ENCODE measurements at regions of chr10 and their contacts with region 1.

Region 1: DNA sequence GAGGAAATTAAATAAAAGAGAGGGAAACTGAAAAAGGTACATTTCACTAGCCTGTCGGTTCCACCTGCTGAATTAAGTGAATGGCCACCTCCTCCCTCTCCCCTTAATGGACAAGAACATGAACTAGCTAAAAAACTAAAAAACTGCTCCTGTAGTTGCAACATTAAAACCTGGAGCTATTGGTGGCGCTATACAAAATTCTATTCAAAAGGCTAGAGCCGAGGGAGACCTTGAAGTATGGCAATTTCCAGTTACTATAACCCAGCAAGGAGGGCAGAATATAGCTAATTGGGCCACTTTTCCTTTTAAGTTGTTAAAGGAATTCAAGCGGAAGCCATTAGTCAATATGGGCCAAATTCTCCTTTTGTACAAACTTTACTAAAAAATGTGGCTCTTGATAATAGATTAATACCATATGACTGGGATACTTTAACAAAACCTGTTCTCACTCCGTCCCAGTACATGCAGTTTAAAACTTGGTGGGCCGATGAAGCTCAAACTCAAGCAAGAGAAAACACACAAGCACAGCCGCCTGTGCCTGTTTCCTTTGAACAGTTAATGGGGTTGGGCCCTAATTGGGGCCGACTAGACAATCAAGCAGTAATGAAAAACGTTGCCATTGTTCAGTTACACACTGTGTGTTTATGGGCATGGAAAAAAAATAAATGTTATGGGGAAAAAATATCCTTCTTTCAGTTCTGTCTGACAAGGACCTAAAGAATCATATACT is 6.5 kb upstream of the CHST3 start:
- DNase-seq: no peak
- H3K4me3 Mint-ChIP-seq: no peak overlapping the region
- H3K27ac Mint-ChIP-seq: no peak overlapping the region
- H3K4me1 Mint-ChIP-seq: peaks cover 4% of the 10 kb centered on the region
- H3K27me3 Mint-ChIP-seq: peaks cover 46% of the 10 kb centered on the region

Region 2: DNA sequence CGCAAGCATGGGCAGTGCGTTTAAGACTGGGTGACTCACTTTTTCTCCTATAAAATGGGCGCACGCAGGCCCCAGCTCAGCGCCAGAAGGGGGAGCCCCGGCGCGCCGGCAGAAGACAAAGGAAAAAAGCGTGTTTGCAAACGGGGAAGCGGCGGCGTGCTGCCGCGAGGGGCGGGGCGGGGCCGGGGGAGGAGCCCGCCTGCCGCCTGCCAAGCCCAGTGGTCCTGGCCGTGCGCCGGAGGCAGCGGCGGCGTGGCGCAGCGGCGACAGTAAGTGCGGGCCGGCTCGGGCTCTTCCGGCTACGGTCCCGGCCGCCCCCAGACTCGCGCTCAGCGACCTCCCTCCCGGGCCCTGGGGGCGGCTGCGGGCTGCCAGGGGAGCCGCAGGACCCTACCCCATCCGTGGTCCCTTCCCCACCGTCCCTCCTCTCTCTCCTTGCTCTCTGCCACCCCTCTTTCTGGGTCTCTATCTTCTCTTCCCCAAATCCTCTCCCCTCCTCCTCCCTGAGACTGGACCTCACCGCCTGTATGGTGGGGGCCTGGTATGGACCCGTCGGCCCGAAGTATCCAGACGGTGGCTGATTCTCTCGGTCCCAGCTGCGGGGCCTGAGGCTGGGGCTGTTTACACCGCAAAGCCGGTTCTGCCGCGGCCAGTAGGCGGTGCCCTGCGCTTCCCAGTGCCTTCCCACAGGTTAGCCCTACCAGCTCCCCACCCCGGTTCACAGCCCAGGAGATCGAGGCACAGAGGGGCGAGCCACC is 638.5 kb before region 1 on chr10 and contains the start of gene SLC29A3:
- intact Hi-C with region 1: no loop called
- DNase-seq: peak; percentile 86
- H3K4me3 Mint-ChIP-seq: peak within 1 kb of the TSS; percentile 99
- H3K27ac Mint-ChIP-seq: peak within 1 kb of the TSS; percentile 91
- H3K4me1 Mint-ChIP-seq: peaks cover 39% of the 10 kb centered on the region
- H3K27me3 Mint-ChIP-seq: no peaks in the 10 kb centered on the region
- total RNA-seq, gene SLC29A3: 7.2 and 7.3 TPM in 2 replicates

Region 3: DNA sequence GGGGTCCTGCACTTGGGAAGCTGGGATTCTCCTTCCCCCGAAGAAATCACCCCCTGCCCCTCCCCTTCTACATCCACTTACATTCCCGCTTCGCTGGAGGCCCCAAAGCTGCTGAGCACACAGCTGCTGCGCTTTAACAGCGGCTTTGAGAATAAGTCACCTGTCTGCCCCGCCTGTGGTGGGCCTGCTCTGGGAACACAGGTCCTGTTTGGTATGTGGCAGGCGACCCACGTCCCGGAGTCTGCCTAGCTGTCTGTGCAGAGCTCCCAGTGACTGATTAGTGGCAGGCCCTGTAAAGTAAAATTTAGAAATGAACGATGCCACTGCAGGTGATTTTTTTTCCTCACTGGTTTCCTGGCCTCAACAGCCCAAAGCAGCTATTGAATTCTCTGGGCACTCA is 514.0 kb before region 1 on chr10:
- intact Hi-C with region 1: no loop called
- DNase-seq: no peak
- H3K4me3 Mint-ChIP-seq: no peak overlapping the region
- H3K27ac Mint-ChIP-seq: no peak overlapping the region
- H3K4me1 Mint-ChIP-seq: no peaks in the 10 kb centered on the region
- H3K27me3 Mint-ChIP-seq: no peaks in the 10 kb centered on the region

Region 4: DNA sequence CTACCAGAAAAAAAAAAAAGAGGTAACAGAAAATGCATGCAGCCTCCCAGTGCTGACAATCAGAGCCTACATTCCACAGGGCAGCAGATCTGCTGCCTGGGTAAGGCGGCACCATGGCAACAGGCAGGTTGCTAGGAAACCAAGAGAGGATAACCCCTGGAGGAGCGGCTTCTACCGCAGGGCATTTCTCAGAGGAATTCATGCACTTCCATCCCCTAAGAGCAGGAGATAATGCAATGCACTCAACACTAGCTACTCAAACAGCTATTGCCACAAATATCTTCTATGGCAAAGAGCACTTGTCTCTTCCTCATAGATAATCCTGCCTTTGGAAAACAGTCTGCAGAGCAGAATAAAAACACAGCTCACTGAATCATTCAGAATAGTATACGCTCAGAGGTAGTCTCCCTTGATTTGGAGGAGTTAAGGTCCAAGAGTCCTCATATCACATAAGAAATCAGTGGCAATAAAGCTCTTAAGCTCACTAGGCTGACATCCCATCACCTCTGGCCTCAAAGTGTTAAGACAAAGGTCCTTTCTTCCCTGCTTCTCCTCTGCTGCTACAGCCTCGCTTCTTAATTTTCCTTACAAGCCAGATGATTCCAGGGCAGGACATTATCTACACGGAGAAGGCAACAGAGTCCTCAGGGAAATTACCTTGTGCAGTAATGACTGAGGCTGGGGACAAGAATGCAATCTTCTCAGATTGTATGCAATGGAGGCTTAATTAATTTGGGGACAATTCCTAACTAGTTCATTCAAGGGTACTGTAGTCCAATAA is 117.3 kb before region 1 on chr10:
- intact Hi-C with region 1: no loop called
- DNase-seq: no peak
- H3K4me3 Mint-ChIP-seq: no peak overlapping the region
- H3K27ac Mint-ChIP-seq: no peak overlapping the region
- H3K4me1 Mint-ChIP-seq: peaks cover 35% of the 10 kb centered on the region
- H3K27me3 Mint-ChIP-seq: no peaks in the 10 kb centered on the region

Region 5: DNA sequence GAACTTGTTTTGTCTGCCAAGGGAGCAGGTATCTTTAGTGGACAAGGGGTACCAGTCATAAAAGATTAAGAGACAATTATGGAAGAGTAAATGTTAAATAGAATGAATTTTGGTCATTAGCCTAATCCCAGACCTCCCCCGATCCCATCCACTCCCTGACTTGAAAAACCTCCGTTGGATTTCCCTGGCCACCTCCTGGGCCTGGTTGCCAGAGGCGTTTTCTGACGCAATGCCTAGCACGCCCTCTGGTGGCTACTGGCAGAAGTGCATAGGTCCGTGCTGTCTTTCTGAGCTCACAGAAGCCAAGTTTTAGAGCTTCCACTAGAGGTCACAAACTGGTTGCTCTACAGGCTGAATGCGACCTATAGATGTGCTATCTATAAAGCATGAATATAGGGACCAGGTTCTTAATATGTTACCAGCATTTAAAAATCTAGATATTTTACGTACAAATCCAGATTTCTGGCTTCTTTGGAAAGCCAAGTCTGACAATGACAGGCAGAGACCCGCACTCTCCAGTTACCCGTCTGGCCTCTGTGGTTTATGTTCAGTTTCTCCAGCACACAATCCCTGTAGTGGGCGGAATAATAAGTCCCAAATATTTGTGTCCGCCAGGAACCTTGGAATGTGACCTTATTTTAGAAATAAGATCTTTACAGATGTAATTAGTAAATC is 90.9 kb after region 1 on chr10:
- intact Hi-C with region 1: loop called (anchors 2 kb)
- DNase-seq: peak; percentile 79
- H3K4me3 Mint-ChIP-seq: no peak overlapping the region
- H3K27ac Mint-ChIP-seq: peak overlapping the region; percentile 7
- H3K4me1 Mint-ChIP-seq: peaks cover 18% of the 10 kb centered on the region
- H3K27me3 Mint-ChIP-seq: no peaks in the 10 kb centered on the region

Region 6: DNA sequence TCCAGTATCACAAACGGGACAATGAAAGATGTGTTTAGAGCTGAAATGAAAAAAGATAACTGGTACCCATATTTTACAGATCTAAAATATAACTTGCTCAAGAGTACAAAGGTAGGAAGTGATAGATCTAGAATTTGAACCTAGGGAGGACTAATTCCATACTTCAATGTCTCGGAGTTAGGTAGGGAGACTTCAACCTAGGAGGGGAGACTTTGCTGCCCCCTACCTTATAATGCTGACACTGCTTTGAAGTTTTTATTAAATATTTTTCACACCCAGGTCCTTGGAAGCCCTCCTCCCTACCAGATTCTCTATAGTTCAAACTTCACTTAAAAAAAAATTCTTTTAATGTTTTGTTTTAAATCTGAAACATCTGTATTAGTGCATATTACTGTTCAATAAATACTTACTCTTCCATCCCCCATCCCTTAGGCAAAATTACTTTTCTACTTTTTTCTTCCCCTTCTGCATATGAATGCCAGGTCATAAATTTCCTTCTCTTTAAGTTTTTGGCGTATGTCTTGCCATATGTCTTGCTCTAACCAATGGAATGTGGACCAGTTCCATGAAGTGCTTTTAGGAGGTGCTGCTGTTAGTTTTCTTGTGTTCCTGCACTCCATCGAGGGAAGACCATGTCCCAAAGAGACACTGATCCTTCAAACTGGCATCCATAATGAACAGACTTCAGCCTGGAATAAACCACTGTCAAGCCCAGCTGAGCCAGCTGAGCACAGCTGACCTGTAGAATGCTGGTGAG is 610.4 kb after region 1 on chr10:
- intact Hi-C with region 1: no loop called
- DNase-seq: no peak
- H3K4me3 Mint-ChIP-seq: no peak overlapping the region
- H3K27ac Mint-ChIP-seq: no peak overlapping the region
- H3K4me1 Mint-ChIP-seq: peaks cover 16% of the 10 kb centered on the region
- H3K27me3 Mint-ChIP-seq: no peaks in the 10 kb centered on the region